Heart left ventricle (tissue), 16 donors: ENCODE measurements at regions of chr3 and their contacts with region 1.

Region 1: GRCh38 chr3:29746163-29746562 is 465.3 kb downstream of the RBMS3 start:
- DNase-seq: no peak
- ATAC-seq: peak in 3 of 4 donors; percentile 13 to 50 (median 44)
- H3K4me3 ChIP-seq: no peak overlapping the region
- H3K27ac ChIP-seq: peak overlapping the region in 1 of 12 donors; percentile 7
- H3K4me1 ChIP-seq: peaks cover 0 to 43% (median 21%) of the 10 kb centered on the region in 12 donors
- H3K27me3 ChIP-seq: no peaks in the 10 kb centered on the region
- CTCF ChIP-seq: no peak
- POLR2A ChIP-seq: no peak

Region 2: DNA sequence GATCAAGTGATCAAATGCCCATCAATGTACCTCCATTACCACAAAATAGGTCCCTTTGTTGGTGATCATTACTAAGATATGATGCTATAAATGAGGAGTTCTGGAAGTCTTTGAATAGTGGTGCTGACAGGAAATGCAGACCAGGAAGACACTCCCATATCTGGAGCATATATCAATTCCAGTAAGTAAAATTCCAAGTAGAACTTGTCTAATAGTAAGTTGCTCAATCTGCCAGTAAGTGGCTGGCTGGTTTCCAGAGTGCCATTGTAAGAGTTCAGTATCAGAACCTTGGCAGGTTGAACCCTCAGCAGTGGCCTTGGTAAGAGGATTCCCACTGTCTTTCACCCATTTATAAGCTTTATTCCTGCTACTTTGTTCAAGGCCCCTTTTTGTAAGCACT is 845.1 kb before region 1 on chr3:
- intact Hi-C with region 1: no loop called
- DNase-seq: peak in 1 of 5 donors; percentile 30
- ATAC-seq: no peak
- H3K4me3 ChIP-seq: no peak overlapping the region
- H3K27ac ChIP-seq: peak overlapping the region in 1 of 12 donors; percentile 30
- H3K4me1 ChIP-seq: peaks cover 0 to 7% (median 0%) of the 10 kb centered on the region in 12 donors
- H3K27me3 ChIP-seq: no peaks in the 10 kb centered on the region
- CTCF ChIP-seq: no peak
- POLR2A ChIP-seq: no peak

Region 3: GRCh38 chr3:29412110-29412509 is 334.1 kb before region 1 on chr3:
- intact Hi-C with region 1: loop called in 1 of 10 experiments (anchors 10 kb)
- DNase-seq: no peak
- ATAC-seq: no peak
- H3K4me3 ChIP-seq: no peak overlapping the region
- H3K27ac ChIP-seq: no peak overlapping the region
- H3K4me1 ChIP-seq: peaks cover 0 to 80% (median 35%) of the 10 kb centered on the region in 12 donors
- H3K27me3 ChIP-seq: no peaks in the 10 kb centered on the region
- CTCF ChIP-seq: no peak
- POLR2A ChIP-seq: no peak

Region 4: GRCh38 chr3:29478611-29479010 is 267.6 kb before region 1 on chr3:
- intact Hi-C with region 1: no loop called
- DNase-seq: no peak
- ATAC-seq: no peak
- H3K4me3 ChIP-seq: no peak overlapping the region
- H3K27ac ChIP-seq: no peak overlapping the region
- H3K4me1 ChIP-seq: peaks cover 0 to 29% (median 0%) of the 10 kb centered on the region in 12 donors
- H3K27me3 ChIP-seq: no peaks in the 10 kb centered on the region
- CTCF ChIP-seq: no peak
- POLR2A ChIP-seq: no peak

Region 5: GRCh38 chr3:29693863-29694262 is 52.3 kb before region 1 on chr3:
- intact Hi-C with region 1: loop called in 6 of 10 experiments (anchors 5 to 10 kb)
- DNase-seq: no peak
- ATAC-seq: peak; percentile 17 to 49 (median 30)
- H3K4me3 ChIP-seq: no peak overlapping the region
- H3K27ac ChIP-seq: peak overlapping the region in 11 of 12 donors; percentile 40 to 82 (median 64)
- H3K4me1 ChIP-seq: peaks cover 6 to 48% (median 35%) of the 10 kb centered on the region in 12 donors
- H3K27me3 ChIP-seq: no peaks in the 10 kb centered on the region
- CTCF ChIP-seq: no peak
- POLR2A ChIP-seq: no peak